Endothelial cell of umbilical vein (primary cell): ENCODE measurements at regions of chr5 and their contacts with region 1.

Region 1: GRCh38 chr5:34499001-34499734 is 157.0 kb upstream of the RAI14 start:
- DNase-seq: peak; percentile 89
- H3K4me3 ChIP-seq: no peak overlapping the region
- H3K27ac ChIP-seq: peak overlapping the region; percentile 90
- H3K4me1 ChIP-seq: peaks cover 14% of the 10 kb centered on the region
- H3K27me3 ChIP-seq: no peaks in the 10 kb centered on the region
- CTCF ChIP-seq: no peak
- POLR2A ChIP-seq: no peak

Region 2: GRCh38 chr5:34517249-34517648 is 18.1 kb after region 1 on chr5:
- CTCF ChIA-PET with region 1: interaction called, 3 read pairs
- POLR2A ChIA-PET with region 1: no interaction called
- dilution Hi-C with region 1: no loop called
- intact Hi-C with region 1: loop called (anchors 2 kb)
- DNase-seq: peak; percentile 69
- H3K4me3 ChIP-seq: no peak overlapping the region
- H3K27ac ChIP-seq: peak overlapping the region; percentile 58
- H3K4me1 ChIP-seq: peaks cover 19% of the 10 kb centered on the region
- H3K27me3 ChIP-seq: no peaks in the 10 kb centered on the region
- CTCF ChIP-seq: no peak
- POLR2A ChIP-seq: no peak

Region 3: DNA sequence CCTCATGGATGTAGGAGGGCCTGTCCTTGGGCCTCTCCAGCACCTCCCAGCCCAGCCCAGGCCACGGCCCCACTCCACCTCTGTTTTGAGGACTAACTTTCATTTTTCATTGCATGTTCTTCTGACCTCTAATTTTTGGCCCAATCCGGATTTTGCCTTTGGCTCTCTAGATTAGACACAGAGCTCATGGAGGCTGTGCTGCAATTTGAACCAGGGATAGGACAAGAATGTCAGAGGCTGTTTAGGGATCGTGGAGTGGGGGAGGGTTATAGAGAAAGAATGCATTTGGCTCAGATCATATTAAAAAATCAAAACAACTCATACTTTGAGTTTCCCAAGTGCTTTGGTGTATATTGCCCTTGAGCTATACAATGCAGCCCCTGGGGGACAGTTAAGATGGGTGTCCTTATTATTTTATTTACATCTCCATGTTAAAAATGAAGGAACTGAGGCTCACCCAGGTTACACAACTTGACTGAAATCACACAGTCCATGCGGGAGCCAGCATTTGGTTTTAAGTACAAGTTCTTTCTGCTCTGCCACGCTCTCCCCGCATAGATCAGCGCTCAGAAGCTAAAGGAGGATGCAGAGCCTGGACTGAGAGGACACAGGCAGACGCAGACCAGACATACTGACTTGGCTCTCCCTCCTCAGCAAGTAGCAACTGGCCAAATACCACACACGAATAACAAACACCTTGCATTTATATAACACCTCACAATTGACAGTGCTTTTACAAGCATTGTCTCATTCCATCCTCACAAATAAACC is 30.6 kb after region 1 on chr5:
- CTCF ChIA-PET with region 1: no interaction called
- POLR2A ChIA-PET with region 1: no interaction called
- dilution Hi-C with region 1: no loop called
- intact Hi-C with region 1: no loop called
- DNase-seq: no peak
- H3K4me3 ChIP-seq: no peak overlapping the region
- H3K27ac ChIP-seq: no peak overlapping the region
- H3K4me1 ChIP-seq: peaks cover 31% of the 10 kb centered on the region
- H3K27me3 ChIP-seq: no peaks in the 10 kb centered on the region
- CTCF ChIP-seq: no peak
- POLR2A ChIP-seq: no peak